Naive thymus-derived CD4-positive, alpha-beta T cell (primary cell): ENCODE measurements at regions of chr7 and their contacts with region 1.

Region 1: GRCh38 chr7:3897438-3898385 is 596.7 kb downstream of the SDK1 start:
- DNase-seq: peak in 7 of 9 donors; percentile 12 to 55 (median 45)
- ATAC-seq: peak; percentile 77
- H3K4me3 ChIP-seq: no peak overlapping the region
- H3K4me3 Mint-ChIP-seq: no peak overlapping the region
- H3K27ac ChIP-seq: no peak overlapping the region
- H3K27ac Mint-ChIP-seq: peak overlapping the region in 1 of 9 donors; percentile 12
- H3K4me1 ChIP-seq: no peaks in the 10 kb centered on the region
- H3K4me1 Mint-ChIP-seq: peaks cover 0 to 9% (median 0%) of the 10 kb centered on the region in 7 donors
- H3K27me3 ChIP-seq: no peaks in the 10 kb centered on the region
- H3K27me3 Mint-ChIP-seq: peaks cover 0 to 9% (median 0%) of the 10 kb centered on the region in 5 donors

Region 2: GRCh38 chr7:2886900-2887299 is 1010.8 kb before region 1 on chr7:
- CTCF ChIA-PET with region 1: interaction called, 3 read pairs
- POLR2A ChIA-PET with region 1: no interaction called
- intact Hi-C with region 1: loop called in 1 of 2 experiments (anchors 2 kb)
- DNase-seq: peak in 8 of 9 donors; percentile 28 to 59 (median 50)
- ATAC-seq: peak; percentile 89
- H3K4me3 ChIP-seq: no peak overlapping the region
- H3K4me3 Mint-ChIP-seq: peak overlapping the region in 4 of 10 donors; percentile 16 to 38 (median 36)
- H3K27ac ChIP-seq: no peak overlapping the region
- H3K27ac Mint-ChIP-seq: peak overlapping the region in 4 of 9 donors; percentile 3 to 57 (median 24)
- H3K4me1 ChIP-seq: no peaks in the 10 kb centered on the region
- H3K4me1 Mint-ChIP-seq: peaks cover 0 to 9% (median 6%) of the 10 kb centered on the region in 7 donors
- H3K27me3 ChIP-seq: no peaks in the 10 kb centered on the region
- H3K27me3 Mint-ChIP-seq: no peaks in the 10 kb centered on the region

Region 3: DNA sequence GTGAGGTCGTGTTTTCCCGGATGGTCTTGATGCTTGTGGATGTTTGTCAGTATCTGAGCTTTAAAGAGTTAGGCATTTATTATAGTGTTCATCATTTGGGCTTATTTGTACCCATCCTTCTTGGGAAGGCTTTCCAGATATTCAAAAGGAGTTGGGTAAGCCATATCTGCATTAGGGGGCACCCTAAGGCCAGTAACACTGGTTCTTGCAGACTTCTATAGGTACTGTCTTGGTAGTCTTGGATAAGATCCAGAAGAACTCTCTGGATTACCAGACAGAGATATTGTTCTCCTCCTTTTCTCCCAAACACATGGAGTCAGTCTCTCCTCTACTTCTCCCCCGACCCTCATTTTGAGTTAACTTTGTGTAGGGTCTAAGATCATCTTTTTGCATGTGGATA is 503.9 kb before region 1 on chr7:
- CTCF ChIA-PET with region 1: no interaction called
- POLR2A ChIA-PET with region 1: no interaction called
- intact Hi-C with region 1: loop called (anchors 1 to 5 kb)
- DNase-seq: no peak
- ATAC-seq: no peak
- H3K4me3 ChIP-seq: no peak overlapping the region
- H3K4me3 Mint-ChIP-seq: no peak overlapping the region
- H3K27ac ChIP-seq: no peak overlapping the region
- H3K27ac Mint-ChIP-seq: no peak overlapping the region
- H3K4me1 ChIP-seq: no peaks in the 10 kb centered on the region
- H3K4me1 Mint-ChIP-seq: peaks cover 0 to 3% (median 0%) of the 10 kb centered on the region in 7 donors
- H3K27me3 ChIP-seq: no peaks in the 10 kb centered on the region
- H3K27me3 Mint-ChIP-seq: peaks cover 0 to 10% (median 0%) of the 10 kb centered on the region in 5 donors

Region 4: DNA sequence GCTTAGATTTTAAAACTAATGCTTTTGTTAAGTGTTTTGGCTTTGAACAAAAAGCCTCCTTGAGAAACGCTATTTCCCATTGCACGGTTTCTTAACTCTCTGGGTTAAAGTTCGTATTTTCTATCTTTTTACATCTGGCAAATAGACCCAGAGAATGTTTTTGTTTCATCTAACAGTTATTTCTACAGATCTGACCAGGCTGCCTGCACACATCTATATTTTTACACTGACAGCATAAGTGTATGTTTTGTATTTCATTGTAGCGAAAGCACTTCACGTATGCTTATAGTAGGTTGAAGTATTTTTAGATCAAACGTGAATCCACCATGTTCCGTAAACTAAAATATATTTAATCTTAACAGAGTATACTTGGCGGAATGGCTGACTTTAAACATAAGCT is 119.4 kb before region 1 on chr7:
- CTCF ChIA-PET with region 1: no interaction called
- POLR2A ChIA-PET with region 1: no interaction called
- intact Hi-C with region 1: no loop called
- DNase-seq: no peak
- ATAC-seq: no peak
- H3K4me3 ChIP-seq: no peak overlapping the region
- H3K4me3 Mint-ChIP-seq: no peak overlapping the region
- H3K27ac ChIP-seq: no peak overlapping the region
- H3K27ac Mint-ChIP-seq: no peak overlapping the region
- H3K4me1 ChIP-seq: no peaks in the 10 kb centered on the region
- H3K4me1 Mint-ChIP-seq: no peaks in the 10 kb centered on the region
- H3K27me3 ChIP-seq: no peaks in the 10 kb centered on the region
- H3K27me3 Mint-ChIP-seq: peaks cover 0 to 16% (median 2%) of the 10 kb centered on the region in 5 donors